ENCODE measurements at regions of chr2 and their contacts with region 1.

Region 1: GRCh38 chr2:196750982-196751635 is 48.4 kb downstream of the GTF3C3 start:
- DNase-seq: peak; percentile 6 to 84 (median 60)

Region 2: DNA sequence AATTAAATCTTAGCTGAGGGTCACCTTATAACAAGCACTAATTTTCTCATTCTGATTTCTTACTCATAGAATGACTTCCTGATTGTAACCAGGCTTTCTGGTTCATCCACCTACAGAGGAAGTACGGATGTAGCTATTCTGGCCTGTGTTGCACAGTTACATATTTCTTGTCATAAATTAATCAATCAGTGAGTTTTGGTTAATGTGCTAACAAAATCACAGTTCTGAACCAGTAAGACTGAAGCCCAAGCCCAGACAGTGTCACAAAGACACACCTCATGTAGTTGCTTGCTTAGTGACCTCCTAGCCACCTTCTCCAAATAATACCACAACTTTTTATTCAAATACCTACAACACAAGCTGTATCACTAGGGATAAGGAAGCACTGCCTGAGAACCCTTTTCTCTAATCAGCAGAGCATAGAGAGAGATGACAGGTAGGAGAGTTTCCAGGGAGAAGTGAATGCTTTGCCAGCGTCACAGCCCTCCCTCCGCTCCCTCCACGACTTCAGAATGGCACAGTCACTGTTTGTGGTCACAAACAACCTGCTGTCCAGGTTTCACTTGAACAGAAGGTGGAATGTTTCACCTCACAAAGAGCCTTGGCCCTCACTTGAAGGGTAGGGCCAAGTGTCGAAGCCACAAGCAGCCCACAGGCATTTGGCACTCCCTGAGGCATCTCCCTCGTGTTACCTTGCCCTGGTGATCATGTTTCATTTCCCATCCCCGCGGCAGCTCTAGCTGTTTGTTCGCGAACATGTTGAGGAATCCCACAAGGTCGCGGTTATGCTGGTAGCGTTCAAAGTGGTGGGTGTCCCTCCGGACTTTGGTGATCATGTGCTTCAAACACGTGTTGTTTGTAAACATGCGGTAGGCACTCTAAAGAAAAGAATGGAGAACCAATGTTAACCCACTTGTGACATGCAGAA is 459.0 kb before region 1 on chr2:
- intact Hi-C with region 1: loop called (anchors 10 kb)
- DNase-seq: no peak

Region 3: GRCh38 chr2:196630531-196630930 is 120.6 kb before region 1 on chr2:
- intact Hi-C with region 1: no loop called
- DNase-seq: no peak

Region 4: DNA sequence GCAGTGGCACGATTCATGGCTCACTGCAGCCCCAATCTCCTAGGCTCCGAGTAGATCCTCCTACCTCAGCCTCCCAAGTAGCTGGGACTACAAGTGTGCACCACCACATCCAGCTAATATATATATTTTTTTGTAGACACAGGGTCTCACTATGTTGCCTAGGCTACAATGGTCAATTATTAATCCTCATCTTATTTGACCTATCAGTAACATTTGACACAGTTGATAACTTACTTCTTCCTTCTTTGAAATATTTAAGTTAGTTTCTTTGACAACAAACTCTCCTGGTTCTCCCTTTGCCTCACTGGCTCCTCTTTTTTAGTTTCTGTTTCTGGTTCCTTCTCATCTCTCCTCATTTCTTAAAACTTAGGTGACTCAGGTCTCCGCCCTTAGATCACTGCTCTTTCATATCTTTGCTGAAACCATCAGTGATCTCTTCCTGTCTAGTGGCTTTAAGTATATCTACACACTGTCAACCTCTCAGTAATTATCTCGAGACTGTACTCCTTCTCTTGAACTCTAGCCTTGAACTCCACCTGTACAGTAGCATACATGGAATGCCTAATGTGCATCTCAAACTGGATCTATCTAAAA is 163.9 kb after region 1 on chr2:
- intact Hi-C with region 1: no loop called
- DNase-seq: no peak

Region 5: GRCh38 chr2:196954001-196954400 is 202.9 kb after region 1 on chr2:
- intact Hi-C with region 1: no loop called
- DNase-seq: no peak

Measured in head of caudate nucleus (tissue), 42 donors.